ENCODE measurements at regions of chr16 and their contacts with region 1.

Region 1: GRCh38 chr16:9679213-9679767 is 502.9 kb downstream of the GRIN2A start:
- DNase-seq: no peak
- ATAC-seq: no peak
- H3K4me3 ChIP-seq: no peak overlapping the region
- H3K27ac ChIP-seq: no peak overlapping the region
- H3K4me1 ChIP-seq: no peaks in the 10 kb centered on the region
- H3K27me3 ChIP-seq: peaks cover 0 to 36% (median 7%) of the 10 kb centered on the region in 7 donors
- CTCF ChIP-seq: no peak

Region 2: DNA sequence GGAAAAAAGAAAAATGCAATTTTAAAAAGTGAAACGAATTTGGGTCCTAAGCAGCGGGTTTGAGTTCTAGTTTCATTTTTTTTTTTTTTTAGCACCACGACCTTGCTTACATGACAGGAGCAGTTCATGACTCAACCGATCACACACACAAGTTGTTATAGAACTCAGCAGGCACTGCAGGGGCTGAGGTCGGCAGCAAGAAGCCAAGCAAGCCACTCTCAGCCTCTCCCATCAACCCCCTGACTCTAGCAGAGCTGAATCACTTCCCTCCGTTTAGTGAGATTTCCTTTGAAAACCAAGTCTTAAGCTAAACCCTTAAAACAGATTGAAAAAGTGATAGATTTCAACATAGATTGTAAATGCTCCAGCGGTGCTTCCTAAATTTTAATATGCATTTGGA is 67.0 kb before region 1 on chr16:
- intact Hi-C with region 1: loop called in 1 of 10 experiments (anchors 10 kb)
- DNase-seq: no peak
- ATAC-seq: no peak
- H3K4me3 ChIP-seq: no peak overlapping the region
- H3K27ac ChIP-seq: no peak overlapping the region
- H3K4me1 ChIP-seq: no peaks in the 10 kb centered on the region
- H3K27me3 ChIP-seq: peaks cover 0 to 3% (median 0%) of the 10 kb centered on the region in 7 donors
- CTCF ChIP-seq: no peak